ENCODE measurements at regions of chr19 and their contacts with region 1.

Region 1: GRCh38 chr19:5790573-5791520 is at the start of gene DUS3L:
- DNase-seq: peak; percentile 89
- ATAC-seq: peak; percentile 93
- H3K4me3 Mint-ChIP-seq: peak within 1 kb of the TSS; percentile 97
- H3K27ac Mint-ChIP-seq: peak within 1 kb of the TSS; percentile 100
- H3K4me1 Mint-ChIP-seq: peaks cover 15% of the 10 kb centered on the region
- H3K27me3 Mint-ChIP-seq: peaks cover 3% of the 10 kb centered on the region
- CTCF ChIP-seq: no peak
- total RNA-seq, gene DUS3L: 82.8 and 89.1 TPM in 2 replicates

Region 2: GRCh38 chr19:4471403-4472173 is 1319.3 kb before region 1 on chr19:
- CTCF ChIA-PET with region 1: no interaction called
- POLR2A ChIA-PET with region 1: no interaction called
- intact Hi-C with region 1: loop called (anchors 5 kb)
- DNase-seq: peak; percentile 83
- ATAC-seq: peak; percentile 86
- H3K4me3 Mint-ChIP-seq: no peak overlapping the region
- H3K27ac Mint-ChIP-seq: no peak overlapping the region
- H3K4me1 Mint-ChIP-seq: peaks cover 22% of the 10 kb centered on the region
- H3K27me3 Mint-ChIP-seq: no peaks in the 10 kb centered on the region
- CTCF ChIP-seq: no peak

Region 3: DNA sequence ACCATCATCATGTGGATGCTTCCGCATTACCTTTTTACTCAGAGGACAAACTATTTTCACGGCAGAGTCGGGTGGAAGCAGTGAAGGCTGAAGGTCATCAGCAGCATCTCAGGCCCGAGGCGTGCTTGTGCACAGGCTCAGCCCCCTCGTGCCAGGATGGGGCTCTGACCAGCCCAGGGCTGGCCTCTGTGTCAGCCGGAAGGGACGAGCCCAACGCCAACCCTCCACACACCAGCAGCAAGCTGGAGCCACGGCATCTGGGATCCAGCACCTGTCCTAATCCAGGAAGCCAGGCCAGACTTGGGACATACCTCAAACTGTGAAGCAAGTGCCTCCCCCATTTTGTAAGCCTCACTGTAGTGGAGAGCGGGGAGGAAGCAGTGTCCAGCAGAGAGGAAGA is 121.6 kb before region 1 on chr19:
- CTCF ChIA-PET with region 1: no interaction called
- POLR2A ChIA-PET with region 1: no interaction called
- intact Hi-C with region 1: no loop called
- DNase-seq: no peak
- ATAC-seq: no peak
- H3K4me3 Mint-ChIP-seq: no peak overlapping the region
- H3K27ac Mint-ChIP-seq: no peak overlapping the region
- H3K4me1 Mint-ChIP-seq: no peaks in the 10 kb centered on the region
- H3K27me3 Mint-ChIP-seq: no peaks in the 10 kb centered on the region
- CTCF ChIP-seq: no peak

Region 4: GRCh38 chr19:5680437-5681368 is 110.1 kb before region 1 on chr19 and contains the starts of genes HSD11B1L and MICOS13:
- CTCF ChIA-PET with region 1: no interaction called
- POLR2A ChIA-PET with region 1: no interaction called
- intact Hi-C with region 1: loop called (anchors 1 kb)
- DNase-seq: peak; percentile 100
- ATAC-seq: peak; percentile 92
- H3K4me3 Mint-ChIP-seq: peak within 1 kb of the TSS; percentile 96
- H3K27ac Mint-ChIP-seq: peak within 1 kb of the TSS; percentile 100
- H3K4me1 Mint-ChIP-seq: peaks cover 28% of the 10 kb centered on the region
- H3K27me3 Mint-ChIP-seq: peaks cover 2% of the 10 kb centered on the region
- CTCF ChIP-seq: no peak
- total RNA-seq, gene HSD11B1L: 1.4 and 1.5 TPM in 2 replicates
- total RNA-seq, gene MICOS13: 58.0 and 60.8 TPM in 2 replicates

Region 5: GRCh38 chr19:5719961-5720790 is 70.7 kb before region 1 on chr19 and contains the starts of genes CATSPERD and LONP1:
- CTCF ChIA-PET with region 1: no interaction called
- POLR2A ChIA-PET with region 1: interaction called, 15 read pairs
- intact Hi-C with region 1: loop called (anchors 1 kb)
- DNase-seq: peak; percentile 94
- ATAC-seq: peak; percentile 87
- H3K4me3 Mint-ChIP-seq: peak within 1 kb of the TSS; percentile 89
- H3K27ac Mint-ChIP-seq: peak within 1 kb of the TSS; percentile 93
- H3K4me1 Mint-ChIP-seq: peaks cover 27% of the 10 kb centered on the region
- H3K27me3 Mint-ChIP-seq: peaks cover 4% of the 10 kb centered on the region
- CTCF ChIP-seq: no peak
- total RNA-seq, gene CATSPERD: not detected in 2 replicates
- total RNA-seq, gene LONP1: 72.9 and 77.5 TPM in 2 replicates

Region 6: GRCh38 chr19:5767949-5768348 is 22.9 kb before region 1 on chr19:
- CTCF ChIA-PET with region 1: no interaction called
- POLR2A ChIA-PET with region 1: no interaction called
- intact Hi-C with region 1: no loop called
- DNase-seq: no peak
- ATAC-seq: no peak
- H3K4me3 Mint-ChIP-seq: no peak overlapping the region
- H3K27ac Mint-ChIP-seq: no peak overlapping the region
- H3K4me1 Mint-ChIP-seq: no peaks in the 10 kb centered on the region
- H3K27me3 Mint-ChIP-seq: no peaks in the 10 kb centered on the region
- CTCF ChIP-seq: no peak

Region 7: DNA sequence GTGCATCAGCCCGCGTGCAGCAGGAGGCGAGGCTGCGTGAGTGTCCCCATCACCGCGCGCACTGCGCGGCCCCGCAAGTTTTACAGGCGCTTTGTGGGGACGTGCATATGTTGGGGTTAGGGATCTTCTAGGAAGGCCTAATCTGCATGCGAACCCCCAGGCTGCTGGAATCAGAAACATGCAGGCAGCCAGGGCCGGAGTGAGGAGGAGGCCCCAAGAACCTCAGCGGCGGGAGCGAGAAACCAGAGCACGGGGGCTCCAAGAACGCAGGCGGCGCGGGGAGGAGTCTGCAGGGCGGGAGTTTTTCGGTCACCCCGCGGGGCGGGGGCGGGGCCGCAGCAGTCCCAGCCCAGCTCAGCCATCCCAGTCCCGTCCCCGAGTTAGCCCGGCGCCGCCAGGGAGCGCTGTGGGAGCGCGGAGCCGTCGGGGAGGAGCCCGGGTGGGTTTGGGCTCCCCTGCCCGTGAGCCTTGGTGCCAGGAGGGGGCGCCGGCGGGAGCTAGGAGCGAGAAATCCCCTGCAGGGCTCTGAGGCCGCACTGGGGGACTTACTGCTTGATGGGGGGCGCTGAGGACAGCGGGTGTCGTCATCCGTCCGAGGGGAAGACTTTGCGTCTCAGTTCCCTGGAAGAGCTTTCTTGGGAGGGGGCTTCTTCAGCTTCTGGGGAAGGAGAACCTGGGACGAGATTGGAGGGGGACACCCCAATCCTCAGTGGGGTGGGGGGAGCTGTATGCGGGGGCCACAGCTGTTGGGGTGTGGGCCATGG is 13.1 kb after region 1 on chr19:
- CTCF ChIA-PET with region 1: interaction called, 12 read pairs
- POLR2A ChIA-PET with region 1: interaction called, 10 read pairs
- intact Hi-C with region 1: loop called (anchors 1 kb)
- DNase-seq: peak; percentile 83
- ATAC-seq: peak; percentile 91
- H3K4me3 Mint-ChIP-seq: peak overlapping the region; percentile 67
- H3K27ac Mint-ChIP-seq: peak overlapping the region; percentile 18
- H3K4me1 Mint-ChIP-seq: peaks cover 24% of the 10 kb centered on the region
- H3K27me3 Mint-ChIP-seq: peaks cover 24% of the 10 kb centered on the region
- CTCF ChIP-seq: no peak

Region 8: DNA sequence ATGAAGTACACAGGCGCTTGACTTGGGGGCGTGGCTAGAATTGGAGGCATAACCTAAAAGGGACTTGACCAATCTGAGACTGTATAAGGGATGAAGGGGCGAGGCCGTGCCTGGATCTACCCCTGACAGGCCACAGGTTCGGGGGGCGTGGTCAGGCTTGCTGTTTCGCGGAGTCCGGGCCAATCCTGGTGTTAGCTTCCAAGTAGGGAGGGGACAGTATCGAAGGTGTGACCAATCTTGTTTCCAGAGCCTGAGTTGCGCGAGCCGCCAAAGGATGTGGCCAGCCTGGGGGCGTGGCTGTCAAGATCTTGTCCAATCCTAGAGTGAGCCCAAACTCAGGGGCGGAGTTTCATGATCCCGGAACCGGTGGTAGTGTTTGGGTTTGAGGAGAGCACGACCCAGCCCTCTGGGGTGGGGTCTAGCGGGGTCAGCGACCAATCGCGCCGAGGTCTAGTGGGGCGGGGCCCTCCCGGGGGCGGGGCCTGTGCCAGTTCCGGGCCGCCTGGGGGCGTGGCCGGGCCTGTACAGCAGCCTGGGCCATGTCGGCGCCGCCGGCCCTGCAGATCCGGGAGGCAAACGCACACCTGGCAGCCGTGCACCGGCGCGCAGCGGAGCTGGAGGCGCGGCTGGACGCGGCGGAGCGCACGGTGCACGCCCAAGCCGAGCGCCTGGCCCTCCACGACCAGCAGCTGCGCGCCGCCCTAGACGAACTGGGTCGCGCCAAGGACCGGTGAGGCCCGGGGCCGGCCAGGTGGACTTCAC is 113.7 kb after region 1 on chr19 and contains the start of gene VMAC:
- CTCF ChIA-PET with region 1: no interaction called
- POLR2A ChIA-PET with region 1: interaction called, 4 read pairs
- intact Hi-C with region 1: loop called (anchors 1 kb)
- DNase-seq: peak; percentile 100
- ATAC-seq: peak; percentile 78
- H3K4me3 Mint-ChIP-seq: peak within 1 kb of the TSS; percentile 95
- H3K27ac Mint-ChIP-seq: peak within 1 kb of the TSS; percentile 98
- H3K4me1 Mint-ChIP-seq: peaks cover 38% of the 10 kb centered on the region
- H3K27me3 Mint-ChIP-seq: no peaks in the 10 kb centered on the region
- CTCF ChIP-seq: no peak
- total RNA-seq, gene VMAC: 11.2 and 13.3 TPM in 2 replicates

Region 9: DNA sequence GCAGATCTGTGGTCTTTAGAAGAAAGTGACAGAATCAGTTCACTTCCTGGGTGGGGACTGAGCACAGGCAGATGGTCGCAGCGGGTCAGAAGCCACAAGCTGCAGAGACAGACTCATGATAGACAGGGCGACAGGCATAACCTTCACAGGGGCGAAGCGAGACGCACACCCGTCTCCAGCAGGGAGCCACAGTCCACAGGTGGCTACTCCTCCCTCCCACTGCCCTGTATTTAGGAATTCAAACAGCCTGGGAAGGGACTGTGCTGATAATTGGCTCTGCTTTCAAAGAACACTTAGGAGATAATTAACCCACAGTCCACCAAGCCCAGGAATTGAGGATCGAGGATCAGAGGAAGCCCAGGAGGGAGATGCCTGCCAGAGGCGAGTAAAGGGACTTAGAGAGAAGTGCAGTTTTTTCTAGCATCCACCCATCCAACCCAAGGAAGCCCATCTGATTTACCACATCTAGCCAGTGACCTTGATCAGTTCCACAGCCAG is 296.3 kb after region 1 on chr19:
- CTCF ChIA-PET with region 1: no interaction called
- POLR2A ChIA-PET with region 1: no interaction called
- intact Hi-C with region 1: no loop called
- DNase-seq: no peak
- ATAC-seq: peak; percentile 49
- H3K4me3 Mint-ChIP-seq: peak overlapping the region; percentile 73
- H3K27ac Mint-ChIP-seq: peak overlapping the region; percentile 91
- H3K4me1 Mint-ChIP-seq: peaks cover 32% of the 10 kb centered on the region
- H3K27me3 Mint-ChIP-seq: no peaks in the 10 kb centered on the region
- CTCF ChIP-seq: no peak

Region 10: DNA sequence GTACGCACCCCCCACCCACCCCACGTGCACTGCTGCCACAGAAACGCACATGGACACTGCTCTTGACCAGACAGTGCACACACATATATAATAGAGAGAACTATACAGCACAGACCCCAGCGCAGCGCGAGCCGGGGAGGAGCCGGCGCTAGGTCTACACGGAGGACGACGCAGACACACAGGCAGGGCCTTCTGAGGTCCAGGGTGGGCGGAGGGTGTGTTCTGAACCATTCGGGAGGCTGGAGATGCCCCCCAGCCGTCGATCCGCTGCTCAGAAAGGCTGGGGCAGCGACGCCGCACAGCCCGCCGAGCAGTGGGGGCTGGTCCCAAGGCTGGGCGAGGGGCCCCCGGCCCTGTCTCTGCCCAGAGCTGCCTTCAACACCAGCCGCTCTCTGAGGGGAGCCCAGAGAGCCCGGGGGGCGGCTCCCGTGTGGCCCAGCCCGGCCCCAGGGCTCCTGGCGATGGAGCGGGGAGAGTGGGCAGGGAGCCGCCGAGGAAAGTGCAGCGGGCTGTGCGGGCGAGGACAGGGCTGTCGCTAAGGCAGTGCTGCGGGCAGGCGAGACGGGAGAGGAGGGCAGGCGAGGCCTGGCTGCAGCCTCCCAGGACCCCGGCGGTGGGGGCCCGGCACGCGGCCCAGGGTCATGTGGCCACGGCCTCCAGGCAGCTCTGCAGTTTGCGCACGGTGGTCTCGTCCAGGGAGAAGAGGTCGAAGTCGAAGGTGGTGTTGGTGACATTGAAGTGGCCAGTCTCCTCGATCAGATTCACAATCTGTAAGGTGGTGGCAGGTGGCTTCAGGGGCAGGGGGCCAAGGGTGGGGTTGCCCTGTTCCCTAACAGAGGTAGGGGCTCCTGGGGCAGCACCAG is 421.8 kb after region 1 on chr19:
- CTCF ChIA-PET with region 1: no interaction called
- POLR2A ChIA-PET with region 1: no interaction called
- intact Hi-C with region 1: no loop called
- DNase-seq: no peak
- ATAC-seq: no peak
- H3K4me3 Mint-ChIP-seq: no peak overlapping the region
- H3K27ac Mint-ChIP-seq: no peak overlapping the region
- H3K4me1 Mint-ChIP-seq: no peaks in the 10 kb centered on the region
- H3K27me3 Mint-ChIP-seq: no peaks in the 10 kb centered on the region
- CTCF ChIP-seq: no peak

Measured in activated B cell treated with CpG ODN at 0.5 μM for 24 hours (primary cell).